SK-N-SH (cell line): ENCODE measurements at regions of chr5 and their contacts with region 1.

Region 1: GRCh38 chr5:42570966-42571960 is 148.0 kb downstream of the GHR start:
- DNase-seq: no peak
- H3K4me3 ChIP-seq: no peak overlapping the region
- H3K27ac ChIP-seq: no peak overlapping the region
- H3K4me1 ChIP-seq: no peaks in the 10 kb centered on the region
- H3K27me3 ChIP-seq: no peaks in the 10 kb centered on the region
- CTCF ChIP-seq: no peak
- EP300 ChIP-seq: no peak
- RAD21 ChIP-seq: no peak

Region 2: DNA sequence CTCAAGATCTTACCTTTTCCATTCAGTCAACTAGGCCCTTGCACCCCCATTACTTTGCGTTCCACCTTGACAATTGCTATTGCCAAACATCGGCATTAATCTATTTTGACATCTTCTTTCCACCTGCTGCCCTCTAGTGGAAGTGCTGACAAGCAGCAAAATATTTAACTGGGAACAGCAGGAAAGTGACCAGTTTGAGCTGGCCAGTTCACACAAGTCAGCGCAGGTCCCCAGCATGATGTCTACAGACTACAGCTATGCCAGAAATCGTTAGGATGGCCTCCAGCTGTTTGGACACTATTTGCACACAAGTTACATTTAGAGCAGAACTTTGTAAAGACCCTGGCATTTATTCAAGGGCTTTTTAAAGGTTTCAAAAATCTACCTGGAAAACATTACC is 12.1 kb after region 1 on chr5:
- CTCF ChIA-PET with region 1: interaction called, 22 read pairs
- POLR2A ChIA-PET with region 1: no interaction called
- DNase-seq: peak; percentile 37
- H3K4me3 ChIP-seq: no peak overlapping the region; a peak in 1 of 4 replicates
- H3K27ac ChIP-seq: no peak overlapping the region
- H3K4me1 ChIP-seq: no peaks in the 10 kb centered on the region
- H3K27me3 ChIP-seq: no peaks in the 10 kb centered on the region; the same call in none of the 2 replicates
- CTCF ChIP-seq: peak; percentile 85
- EP300 ChIP-seq: no peak
- RAD21 ChIP-seq: peak; percentile 59